Esophagus muscularis mucosa (tissue), 4 donors: ENCODE measurements at regions of chr6 and their contacts with region 1.

Region 1: GRCh38 chr6:105424175-105424783 is 21.4 kb upstream of the PREP start:
- DNase-seq: no peak
- H3K4me3 ChIP-seq: no peak overlapping the region
- H3K27ac ChIP-seq: no peak overlapping the region
- H3K4me1 ChIP-seq: peaks cover 4 to 10% (median 7%) of the 10 kb centered on the region in 4 donors
- H3K27me3 ChIP-seq: no peaks in the 10 kb centered on the region
- CTCF ChIP-seq: peak; percentile 49 to 72 (median 61)
- EP300 ChIP-seq: no peak
- POLR2A ChIP-seq: no peak

Region 2: GRCh38 chr6:105087571-105088211 is 336.6 kb before region 1 on chr6:
- intact Hi-C with region 1: loop called (anchors 2 kb)
- DNase-seq: no peak
- H3K4me3 ChIP-seq: no peak overlapping the region
- H3K27ac ChIP-seq: no peak overlapping the region
- H3K4me1 ChIP-seq: no peaks in the 10 kb centered on the region
- H3K27me3 ChIP-seq: no peaks in the 10 kb centered on the region
- CTCF ChIP-seq: peak; percentile 68 to 88 (median 83)
- EP300 ChIP-seq: no peak
- POLR2A ChIP-seq: no peak